ENCODE measurements at regions of chr2 and their contacts with region 1.

Region 1: GRCh38 chr2:224412141-224413015 is 10.5 kb upstream of the FAM124B start:
- DNase-seq: no peak
- ATAC-seq: peak; percentile 75
- H3K4me3 ChIP-seq: no peak overlapping the region
- H3K27ac ChIP-seq: no peak overlapping the region
- H3K4me1 ChIP-seq: peaks cover 2% of the 10 kb centered on the region; the same call in 1 of the 2 replicates
- H3K27me3 ChIP-seq: peaks cover 0 to 8% of the 10 kb centered on the region in 2 experiments; a peak in 1 of 5 replicates
- CTCF ChIP-seq: no peak
- EP300 ChIP-seq: no peak
- POLR2A ChIP-seq: no peak
- RAD21 ChIP-seq: no peak

Region 2: GRCh38 chr2:224565452-224566035 is 153.2 kb after region 1 on chr2:
- CTCF ChIA-PET with region 1: no interaction called
- POLR2A ChIA-PET with region 1: no interaction called
- in situ Hi-C with region 1: no loop called
- intact Hi-C with region 1: loop called (anchors 1 kb)
- DNase-seq: no peak
- ATAC-seq: no peak
- H3K4me3 ChIP-seq: no peak overlapping the region
- H3K27ac ChIP-seq: no peak overlapping the region
- H3K4me1 ChIP-seq: peaks cover 57% of the 10 kb centered on the region
- H3K27me3 ChIP-seq: no peaks in the 10 kb centered on the region
- CTCF ChIP-seq: no peak
- EP300 ChIP-seq: no peak
- POLR2A ChIP-seq: no peak
- RAD21 ChIP-seq: no peak